ENCODE measurements at regions of chrX and their contacts with region 1.

Region 1: GRCh38 chrX:110317820-110318658 is at the start of gene AMMECR1:
- DNase-seq: peak; percentile 93
- H3K4me3 Mint-ChIP-seq: peak within 1 kb of the TSS; percentile 97
- H3K27ac Mint-ChIP-seq: peak within 1 kb of the TSS; percentile 97
- H3K4me1 Mint-ChIP-seq: peaks cover 14% of the 10 kb centered on the region
- H3K27me3 Mint-ChIP-seq: peaks cover 5% of the 10 kb centered on the region
- total RNA-seq, gene AMMECR1: 12.2 and 15.0 TPM in 2 replicates

Region 2: DNA sequence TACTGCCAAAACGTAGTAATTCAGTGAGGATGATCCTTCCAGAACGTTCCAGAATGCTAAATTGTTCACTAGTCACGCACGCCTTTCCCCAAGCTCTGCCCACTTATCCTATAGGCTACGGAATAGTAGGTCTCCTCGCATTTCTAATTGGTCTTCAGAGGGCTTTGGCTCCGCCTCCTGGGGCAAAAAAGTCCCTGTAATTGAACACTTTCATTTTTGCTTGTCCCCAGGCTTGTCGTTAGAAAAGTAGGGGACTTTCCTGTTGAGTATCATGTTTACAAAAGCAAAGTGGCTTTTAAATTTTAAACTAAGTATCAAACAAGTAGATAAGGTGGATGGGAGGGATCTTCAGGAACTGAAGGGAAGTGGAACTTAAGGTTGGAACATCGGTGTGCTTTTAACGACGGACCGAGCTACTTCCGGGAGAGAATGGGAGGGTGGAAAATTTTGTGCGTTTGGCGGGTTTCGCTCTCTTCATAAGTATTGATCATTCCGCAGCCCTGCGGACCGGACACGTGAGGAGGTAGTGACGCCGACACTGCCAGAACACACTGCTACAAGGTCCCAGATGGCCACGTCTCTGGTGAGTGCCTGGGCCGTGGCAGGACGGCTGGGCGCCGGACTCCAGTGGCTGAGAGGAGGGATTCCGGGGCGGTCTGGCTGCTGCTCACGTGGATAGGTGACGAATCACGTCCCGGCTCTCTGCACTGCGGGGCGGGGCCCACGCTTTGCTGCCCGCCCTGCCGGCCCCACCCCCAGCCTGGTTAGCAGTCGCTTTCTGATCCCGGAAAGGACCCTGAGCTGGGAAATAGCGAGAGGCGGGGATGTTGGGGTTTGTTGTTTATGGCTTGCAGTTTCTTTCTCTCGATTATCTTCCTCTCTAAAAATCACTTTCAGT is 781.4 kb before region 1 on chrX and contains the start of gene NXT2:
- intact Hi-C with region 1: loop called (anchors 10 kb)
- DNase-seq: peak; percentile 95
- H3K4me3 Mint-ChIP-seq: peak within 1 kb of the TSS; percentile 98
- H3K27ac Mint-ChIP-seq: peak within 1 kb of the TSS; percentile 99
- H3K4me1 Mint-ChIP-seq: peaks cover 14% of the 10 kb centered on the region
- H3K27me3 Mint-ChIP-seq: peaks cover 4% of the 10 kb centered on the region
- total RNA-seq, gene NXT2: 12.5 and 14.1 TPM in 2 replicates

Region 3: GRCh38 chrX:110167952-110168451 is 150.0 kb before region 1 on chrX:
- intact Hi-C with region 1: loop called (anchors 5 kb)
- DNase-seq: peak; percentile 80
- H3K4me3 Mint-ChIP-seq: no peak overlapping the region
- H3K27ac Mint-ChIP-seq: no peak overlapping the region
- H3K4me1 Mint-ChIP-seq: peaks cover 2% of the 10 kb centered on the region
- H3K27me3 Mint-ChIP-seq: no peaks in the 10 kb centered on the region

Region 4: GRCh38 chrX:110204986-110205385 is 113.1 kb before region 1 on chrX:
- intact Hi-C with region 1: loop called (anchors 10 kb)
- DNase-seq: no peak
- H3K4me3 Mint-ChIP-seq: no peak overlapping the region
- H3K27ac Mint-ChIP-seq: no peak overlapping the region
- H3K4me1 Mint-ChIP-seq: peaks cover 6% of the 10 kb centered on the region
- H3K27me3 Mint-ChIP-seq: no peaks in the 10 kb centered on the region

Region 5: GRCh38 chrX:110304884-110305283 is 13.2 kb before region 1 on chrX:
- intact Hi-C with region 1: no loop called
- DNase-seq: no peak
- H3K4me3 Mint-ChIP-seq: no peak overlapping the region
- H3K27ac Mint-ChIP-seq: no peak overlapping the region
- H3K4me1 Mint-ChIP-seq: peaks cover 14% of the 10 kb centered on the region
- H3K27me3 Mint-ChIP-seq: no peaks in the 10 kb centered on the region

Region 6: DNA sequence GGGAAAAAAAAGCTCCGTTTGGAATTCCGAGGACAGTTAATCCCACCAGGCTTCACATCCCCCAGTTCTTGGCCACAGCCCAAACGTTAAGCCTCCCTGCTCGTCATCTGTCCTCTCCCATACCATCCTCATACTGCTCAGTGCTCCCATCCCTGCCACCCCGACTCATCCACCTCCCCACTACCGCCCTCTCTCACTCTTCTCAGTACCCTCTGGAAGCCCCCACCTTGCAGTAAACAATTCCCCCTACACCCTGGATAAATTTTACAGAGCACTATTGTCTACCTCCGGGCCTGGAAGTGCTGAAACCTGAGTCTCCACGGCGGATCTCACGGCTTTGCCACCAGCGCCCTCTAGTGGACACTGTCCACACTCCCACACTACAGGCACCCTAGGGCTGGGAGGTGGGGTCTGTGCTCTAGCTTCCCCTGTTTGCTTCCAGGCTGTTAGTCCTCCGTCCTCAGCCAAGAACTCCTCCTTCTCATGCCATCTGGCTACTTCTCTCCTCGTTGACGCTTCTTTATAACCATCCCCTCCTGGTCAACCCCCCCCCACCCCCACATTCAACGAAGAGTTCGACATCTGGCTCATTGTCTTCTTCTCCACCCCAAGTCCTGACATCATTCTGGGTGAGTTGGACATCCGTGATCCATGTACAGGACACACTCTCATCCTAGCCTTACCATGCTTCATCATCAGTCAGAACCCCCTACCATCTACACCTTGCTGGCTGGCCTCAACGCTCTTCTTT is 95.1 kb after region 1 on chrX:
- intact Hi-C with region 1: loop called (anchors 5 kb)
- DNase-seq: peak; percentile 88
- H3K4me3 Mint-ChIP-seq: no peak overlapping the region
- H3K27ac Mint-ChIP-seq: no peak overlapping the region
- H3K4me1 Mint-ChIP-seq: peaks cover 6% of the 10 kb centered on the region
- H3K27me3 Mint-ChIP-seq: peaks cover 2% of the 10 kb centered on the region

Region 7: DNA sequence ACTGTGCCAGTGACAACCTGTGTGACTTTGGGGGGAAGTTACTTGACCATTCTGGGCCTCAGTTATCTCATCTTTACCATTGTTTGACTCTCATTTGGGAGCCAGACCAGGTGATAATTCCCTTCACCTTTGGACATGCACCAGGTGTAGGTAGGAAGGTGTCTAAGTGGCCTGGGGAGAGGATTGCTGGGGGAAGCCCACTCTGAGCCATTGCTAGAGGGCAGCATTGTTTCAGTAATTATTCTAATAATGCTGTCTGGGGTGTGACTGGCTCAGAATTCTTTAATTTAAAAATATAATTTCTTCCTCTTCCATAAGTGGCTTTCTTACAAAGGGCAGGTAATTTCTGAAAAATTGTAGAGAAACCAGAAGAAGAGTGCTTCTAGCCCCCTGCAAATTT is 144.9 kb after region 1 on chrX:
- intact Hi-C with region 1: no loop called
- DNase-seq: no peak
- H3K4me3 Mint-ChIP-seq: no peak overlapping the region
- H3K27ac Mint-ChIP-seq: no peak overlapping the region
- H3K4me1 Mint-ChIP-seq: no peaks in the 10 kb centered on the region
- H3K27me3 Mint-ChIP-seq: peaks cover 2% of the 10 kb centered on the region